GM12878 (cell line): ENCODE measurements at regions of chr13 and their contacts with region 1.

Region 1: DNA sequence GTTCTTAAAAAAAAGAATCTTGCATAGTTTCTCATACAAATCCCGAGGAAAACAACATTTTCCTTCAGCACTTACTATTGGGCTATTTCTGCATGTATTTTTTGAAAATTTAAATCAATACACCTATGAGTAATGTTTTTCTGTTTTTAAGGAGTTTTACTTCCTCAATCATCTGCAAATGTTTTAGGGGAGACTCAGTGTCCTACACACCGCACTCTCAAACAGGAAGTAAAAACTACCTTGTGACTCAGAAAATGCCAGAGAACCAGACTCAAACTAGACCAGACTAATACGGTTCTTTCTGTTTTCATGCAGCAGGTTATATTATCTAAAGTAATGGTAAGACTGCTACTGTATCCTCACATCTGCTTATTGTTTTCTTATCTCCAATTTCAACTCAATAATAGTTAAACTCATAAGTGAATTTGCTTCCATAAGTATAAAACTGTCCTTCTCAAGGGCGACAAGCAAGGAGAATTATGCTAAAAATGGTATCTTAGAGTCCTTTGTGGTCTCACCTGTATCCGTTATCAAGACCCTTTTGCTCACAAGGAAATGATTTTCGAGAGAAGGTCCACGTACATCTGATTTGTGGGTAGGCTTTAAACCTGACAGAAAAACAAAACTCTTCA is 52.5 kb downstream of the FLT3 start:
- DNase-seq: peak; percentile 94
- ATAC-seq: peak; percentile 87
- H3K4me3 ChIP-seq: peak overlapping the region; percentile 57; the same call in 1 of the 2 replicates
- H3K27ac ChIP-seq: peak overlapping the region; percentile 88
- H3K4me1 ChIP-seq: peaks cover 44% of the 10 kb centered on the region
- H3K27me3 ChIP-seq: no peaks in the 10 kb centered on the region
- CTCF ChIP-seq: no peak
- EP300 ChIP-seq: peak; percentile 5 to 80; a peak in 3 of 4 replicates
- POLR2A ChIP-seq: no peak
- RAD21 ChIP-seq: no peak

Region 2: GRCh38 chr13:28268800-28269223 is 220.9 kb after region 1 on chr13:
- CTCF ChIA-PET with region 1: no interaction called
- POLR2A ChIA-PET with region 1: no interaction called
- RAD21 ChIA-PET with region 1: no interaction called
- SMC1A ChIA-PET with region 1: no interaction called
- in situ Hi-C with region 1: no loop called
- intact Hi-C with region 1: loop called (anchors 10 kb)
- DNase-seq: peak; percentile 94
- ATAC-seq: peak; percentile 99
- H3K4me3 ChIP-seq: no peak overlapping the region
- H3K27ac ChIP-seq: peak overlapping the region; percentile 54
- H3K4me1 ChIP-seq: peaks cover 10% of the 10 kb centered on the region; the same call in 1 of the 2 replicates
- H3K27me3 ChIP-seq: no peaks in the 10 kb centered on the region
- CTCF ChIP-seq: no peak
- EP300 ChIP-seq: peak; percentile 96 to 100
- POLR2A ChIP-seq: no peak
- RAD21 ChIP-seq: peak; percentile 51